PC-9 (cell line): ENCODE measurements at regions of chr9 and their contacts with region 1.

Region 1: GRCh38 chr9:75850465-75851245 is 39.8 kb upstream of the PCSK5 start:
- DNase-seq: no peak
- H3K4me3 ChIP-seq: no peak overlapping the region
- H3K27ac ChIP-seq: no peak overlapping the region
- H3K4me1 ChIP-seq: no peaks in the 10 kb centered on the region
- H3K27me3 ChIP-seq: no peaks in the 10 kb centered on the region
- CTCF ChIP-seq: no peak

Region 2: GRCh38 chr9:76255781-76256455 is 405.3 kb after region 1 on chr9:
- CTCF ChIA-PET with region 1: interaction called, 16 read pairs
- POLR2A ChIA-PET with region 1: no interaction called
- intact Hi-C with region 1: no loop called
- DNase-seq: no peak
- H3K4me3 ChIP-seq: no peak overlapping the region
- H3K27ac ChIP-seq: no peak overlapping the region
- H3K4me1 ChIP-seq: no peaks in the 10 kb centered on the region
- H3K27me3 ChIP-seq: no peaks in the 10 kb centered on the region
- CTCF ChIP-seq: no peak

Region 3: GRCh38 chr9:77424993-77425392 is 1574.3 kb after region 1 on chr9:
- CTCF ChIA-PET with region 1: interaction called, 16 read pairs
- POLR2A ChIA-PET with region 1: no interaction called
- intact Hi-C with region 1: no loop called
- DNase-seq: no peak
- H3K4me3 ChIP-seq: no peak overlapping the region
- H3K27ac ChIP-seq: no peak overlapping the region
- H3K4me1 ChIP-seq: no peaks in the 10 kb centered on the region
- H3K27me3 ChIP-seq: no peaks in the 10 kb centered on the region
- CTCF ChIP-seq: no peak